Dendritic cell treated with granulocyte-macrophage colony-stimulating factor and Interleukin-4, amounts not matched to agents 40 ng/mL and 50 ng/mL, for 4 days (primary cell): ENCODE measurements at regions of chr6 and their contacts with region 1.

Region 1: DNA sequence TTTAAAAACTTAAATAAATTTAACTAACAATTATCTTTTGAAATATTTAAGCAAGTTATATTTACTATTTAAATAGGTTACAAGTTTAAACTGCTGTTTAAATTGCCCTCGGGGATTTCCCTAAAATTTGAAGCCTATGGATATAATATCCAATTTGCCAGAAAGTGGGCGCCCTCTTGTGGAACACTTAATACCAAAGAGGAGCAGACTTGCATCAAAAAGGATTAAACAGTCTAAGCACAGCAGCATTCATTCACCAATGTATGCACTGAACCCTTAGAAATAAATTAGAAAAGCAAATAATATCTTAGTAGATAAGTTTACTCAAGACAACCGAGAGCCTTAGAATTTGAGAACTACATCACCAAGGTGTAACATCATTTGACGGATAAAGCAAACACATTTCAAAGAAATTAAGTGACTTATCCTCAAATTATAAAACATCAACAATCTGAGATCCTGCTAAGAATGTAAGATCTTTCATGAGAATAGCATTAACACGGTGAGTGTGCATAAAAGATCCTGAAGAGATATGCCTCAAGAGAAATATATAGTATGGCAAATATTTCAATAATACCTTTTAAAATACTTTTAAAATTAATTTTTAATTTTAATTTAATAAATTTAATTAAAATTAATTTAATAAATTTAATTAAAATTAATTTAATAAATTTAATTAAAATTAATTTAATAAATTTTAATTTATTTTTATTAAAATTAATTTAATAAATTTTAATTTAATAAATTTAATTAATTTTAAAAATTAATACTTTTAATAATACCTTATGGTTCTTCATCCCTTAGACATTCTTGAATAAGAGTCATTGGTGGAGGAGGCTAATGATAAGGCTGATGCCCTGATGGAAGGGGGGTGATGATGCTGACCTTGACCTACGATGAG is 11.5 kb upstream of the MEP1A start:
- H3K4me3 Mint-ChIP-seq: no peak overlapping the region
- H3K27ac Mint-ChIP-seq: no peak overlapping the region
- H3K4me1 Mint-ChIP-seq: peaks cover 14% of the 10 kb centered on the region
- H3K27me3 Mint-ChIP-seq: no peaks in the 10 kb centered on the region

Region 2: GRCh38 chr6:46565531-46565930 is 216.2 kb before region 1 on chr6:
- intact Hi-C with region 1: no loop called
- H3K4me3 Mint-ChIP-seq: no peak overlapping the region
- H3K27ac Mint-ChIP-seq: no peak overlapping the region
- H3K4me1 Mint-ChIP-seq: no peaks in the 10 kb centered on the region
- H3K27me3 Mint-ChIP-seq: no peaks in the 10 kb centered on the region

Region 3: DNA sequence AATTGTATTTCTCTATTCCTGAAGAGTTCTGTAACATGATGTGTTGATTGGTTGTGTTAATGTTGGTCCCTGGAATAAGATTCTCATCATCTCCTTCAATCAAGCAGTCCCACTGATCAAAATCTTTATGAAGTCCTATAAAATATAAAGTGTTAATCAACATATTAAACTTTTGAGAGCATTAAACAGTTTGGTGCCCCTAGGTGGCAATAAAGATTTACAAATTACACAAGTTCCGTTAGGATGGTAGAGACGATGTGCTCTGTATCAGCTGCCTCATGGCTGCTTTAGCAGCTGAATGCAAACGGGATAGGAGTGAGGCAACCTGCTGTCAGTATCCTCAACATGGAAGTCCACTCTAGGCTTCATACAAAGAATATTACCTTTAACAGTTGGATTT is 77.2 kb before region 1 on chr6:
- intact Hi-C with region 1: loop called (anchors 1 kb)
- H3K4me3 Mint-ChIP-seq: no peak overlapping the region
- H3K27ac Mint-ChIP-seq: no peak overlapping the region
- H3K4me1 Mint-ChIP-seq: peaks cover 21% of the 10 kb centered on the region
- H3K27me3 Mint-ChIP-seq: peaks cover 2% of the 10 kb centered on the region

Region 4: GRCh38 chr6:47097092-47097945 is 315.6 kb after region 1 on chr6:
- intact Hi-C with region 1: no loop called
- H3K4me3 Mint-ChIP-seq: no peak overlapping the region
- H3K27ac Mint-ChIP-seq: peak overlapping the region; percentile 18
- H3K4me1 Mint-ChIP-seq: peaks cover 10% of the 10 kb centered on the region
- H3K27me3 Mint-ChIP-seq: peaks cover 65% of the 10 kb centered on the region